WTC11 (cell line): ENCODE measurements at regions of chr14 and their contacts with region 1.

Region 1: DNA sequence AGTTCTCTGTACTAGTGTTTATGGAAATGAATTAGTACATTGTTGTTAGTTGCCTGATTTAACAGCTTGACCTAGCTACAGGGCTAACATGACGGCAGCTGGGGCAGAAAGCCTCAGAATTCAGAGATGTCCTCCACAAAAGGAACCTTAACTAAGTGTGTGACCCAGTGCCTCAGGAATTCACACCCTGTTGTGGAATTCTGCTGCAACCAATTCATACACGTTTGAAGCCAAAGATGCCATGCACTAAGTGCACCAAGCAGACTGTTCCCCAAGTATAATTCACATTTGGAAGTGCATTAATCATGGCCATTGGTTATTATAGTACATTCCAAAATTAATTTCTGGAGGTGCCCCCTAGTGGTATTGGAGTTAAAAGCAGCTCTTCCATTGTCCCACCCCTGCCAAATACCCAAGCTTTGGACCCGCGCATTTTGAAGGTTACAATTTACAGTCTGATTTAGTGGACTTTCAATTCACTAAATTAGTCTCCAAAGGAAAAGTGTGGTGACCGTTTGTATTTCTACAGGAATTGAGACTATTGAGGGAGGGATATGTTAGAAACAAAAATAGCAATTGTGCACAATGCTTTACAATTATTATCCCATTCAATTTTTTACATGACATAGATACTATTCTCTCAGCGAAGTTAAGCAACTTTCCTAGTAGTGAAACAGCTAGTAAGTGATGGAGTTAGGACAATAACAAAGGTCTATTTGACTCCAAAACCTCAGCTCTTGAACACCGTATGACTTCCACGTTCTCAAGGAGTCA is 85.9 kb downstream of the PAX9 start:
- DNase-seq: no peak
- ATAC-seq: peak; percentile 77
- H3K4me3 Mint-ChIP-seq: no peak overlapping the region
- H3K27ac Mint-ChIP-seq: no peak overlapping the region
- H3K4me1 Mint-ChIP-seq: 0 out of 2 replicates have a peak, but pooled peaks cover 9% of the 10 kb centered on the region
- H3K27me3 Mint-ChIP-seq: no peaks in the 10 kb centered on the region
- CTCF ChIP-seq: peak; percentile 72

Region 2: DNA sequence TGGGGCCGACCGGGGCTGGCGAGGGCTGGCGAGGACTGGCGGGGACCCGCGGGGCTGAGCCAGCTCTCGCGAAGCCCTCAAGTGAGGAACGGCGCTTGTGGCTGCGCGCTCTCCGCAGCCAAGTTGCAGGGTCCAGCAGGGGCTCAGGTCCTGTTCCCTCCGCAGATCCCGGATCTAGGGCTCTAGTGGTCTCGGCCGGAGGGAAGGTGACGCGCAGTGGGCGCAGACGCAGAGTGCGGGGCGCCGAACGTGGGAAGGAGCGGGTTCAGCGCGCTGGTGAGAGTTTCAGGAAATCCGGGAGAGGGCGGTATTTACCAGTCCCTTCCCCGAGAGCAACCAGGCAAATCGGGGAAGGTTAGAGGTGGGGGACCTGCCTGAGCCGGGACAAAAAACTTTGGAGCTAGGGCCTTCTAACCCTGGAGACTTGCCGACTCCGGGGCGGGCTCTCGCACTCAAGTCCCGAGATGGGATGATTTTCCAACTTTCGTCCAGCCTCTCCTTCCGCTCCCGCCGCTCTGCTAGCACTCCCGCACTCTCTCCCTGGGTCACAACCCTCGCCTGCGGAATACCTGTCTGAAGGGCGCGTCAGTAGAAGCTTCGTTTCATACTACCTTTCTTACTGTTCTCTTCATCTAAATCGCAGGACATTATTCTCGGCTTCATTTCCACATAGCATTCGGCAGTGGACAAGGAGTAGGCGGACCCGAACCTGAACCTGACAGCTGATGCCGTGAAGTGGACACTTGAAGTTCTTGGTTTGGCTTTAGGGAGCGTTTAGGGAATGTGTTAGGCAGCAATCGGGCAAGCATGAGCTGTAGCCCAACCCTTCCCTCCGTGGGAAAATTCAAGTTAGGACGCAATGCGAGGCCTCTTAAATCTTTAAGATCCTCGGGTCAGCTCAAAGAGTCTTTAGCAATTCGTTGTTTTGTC is 99.5 kb before region 1 on chr14:
- CTCF ChIA-PET with region 1: interaction called, 22 read pairs
- POLR2A ChIA-PET with region 1: no interaction called
- DNase-seq: peak; percentile 70
- ATAC-seq: peak; percentile 83
- H3K4me3 Mint-ChIP-seq: peak overlapping the region; percentile 69
- H3K27ac Mint-ChIP-seq: no peak overlapping the region
- H3K4me1 Mint-ChIP-seq: peaks cover 8% of the 10 kb centered on the region
- H3K27me3 Mint-ChIP-seq: peaks cover 100% of the 10 kb centered on the region
- CTCF ChIP-seq: no peak; the same call in 1 of the 2 replicates

Region 3: GRCh38 chr14:36655963-36656686 is 91.5 kb before region 1 on chr14:
- CTCF ChIA-PET with region 1: interaction called, 10 read pairs
- POLR2A ChIA-PET with region 1: no interaction called
- DNase-seq: peak; percentile 84
- ATAC-seq: peak; percentile 43
- H3K4me3 Mint-ChIP-seq: peak overlapping the region; percentile 55
- H3K27ac Mint-ChIP-seq: no peak overlapping the region
- H3K4me1 Mint-ChIP-seq: peaks cover 48% of the 10 kb centered on the region
- H3K27me3 Mint-ChIP-seq: peaks cover 100% of the 10 kb centered on the region
- CTCF ChIP-seq: peak; percentile 88

Region 4: DNA sequence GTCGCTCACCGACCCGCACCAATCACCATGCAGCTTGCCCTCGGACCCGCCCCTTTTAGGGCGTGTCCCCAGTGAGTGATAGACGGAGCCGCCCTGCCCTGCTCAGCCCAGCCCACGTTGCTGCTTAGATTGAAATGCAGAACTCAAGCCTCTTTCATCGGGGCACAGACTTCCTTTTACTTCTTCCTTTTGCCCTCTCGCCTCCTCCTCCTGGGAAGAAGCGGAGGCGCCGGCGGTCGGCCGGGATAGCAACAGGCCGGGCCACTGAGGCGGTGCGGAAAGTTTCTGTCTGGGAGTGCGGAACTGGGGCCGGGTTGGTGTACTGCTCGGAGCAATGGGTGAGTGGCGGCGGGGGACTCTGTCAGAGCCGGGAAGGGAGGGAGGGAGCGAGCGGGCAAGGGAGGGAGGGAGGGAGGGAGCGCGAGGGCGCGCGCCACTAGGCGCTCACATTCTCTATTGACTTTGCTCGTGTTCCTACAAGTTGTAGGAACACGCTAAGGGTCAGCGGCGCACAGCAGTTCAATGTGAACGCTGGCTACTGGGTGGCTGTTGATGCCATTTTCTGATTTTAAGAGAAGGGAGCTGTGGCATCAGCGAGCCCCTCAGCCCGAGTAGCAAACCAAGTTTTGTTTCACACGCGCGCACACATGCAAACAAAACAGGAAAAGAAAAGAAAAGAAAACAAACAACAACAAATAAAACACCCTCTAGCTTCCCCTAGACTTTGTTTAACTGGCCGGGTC is 85.7 kb before region 1 on chr14 and contains the start of gene PAX9:
- CTCF ChIA-PET with region 1: interaction called, 14 read pairs
- POLR2A ChIA-PET with region 1: no interaction called
- DNase-seq: peak; percentile 96
- ATAC-seq: peak; percentile 81
- H3K4me3 Mint-ChIP-seq: peak within 1 kb of the TSS; percentile 76
- H3K27ac Mint-ChIP-seq: no peak within 1 kb of the TSS
- H3K4me1 Mint-ChIP-seq: peaks cover 51% of the 10 kb centered on the region
- H3K27me3 Mint-ChIP-seq: peaks cover 100% of the 10 kb centered on the region
- CTCF ChIP-seq: no peak
- total RNA-seq, gene PAX9: not detected in 3 replicates

Region 5: DNA sequence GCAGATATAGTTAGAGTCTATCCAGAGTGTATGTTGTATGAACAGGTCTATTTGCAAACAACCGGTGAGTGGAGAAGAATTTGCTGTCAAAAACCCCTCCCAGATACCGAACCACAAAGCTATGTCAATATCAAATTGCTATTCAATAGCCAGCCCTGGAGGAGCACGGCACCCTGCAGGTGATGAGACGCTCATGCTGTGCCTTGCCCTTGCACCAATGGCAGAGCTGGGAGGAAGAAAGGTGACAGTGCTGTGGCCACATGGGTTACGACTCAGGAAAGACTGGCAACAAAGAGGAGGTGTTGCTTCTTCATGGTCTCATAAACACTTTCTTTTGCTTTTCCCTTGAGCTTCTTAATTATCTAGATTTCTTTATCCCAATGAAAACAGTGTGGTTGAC is 30.2 kb before region 1 on chr14:
- CTCF ChIA-PET with region 1: interaction called, 11 read pairs
- POLR2A ChIA-PET with region 1: no interaction called
- DNase-seq: peak; percentile 24
- ATAC-seq: peak; percentile 87
- H3K4me3 Mint-ChIP-seq: no peak overlapping the region
- H3K27ac Mint-ChIP-seq: no peak overlapping the region
- H3K4me1 Mint-ChIP-seq: peaks cover 12% of the 10 kb centered on the region
- H3K27me3 Mint-ChIP-seq: no peaks in the 10 kb centered on the region
- CTCF ChIP-seq: no peak

Region 6: DNA sequence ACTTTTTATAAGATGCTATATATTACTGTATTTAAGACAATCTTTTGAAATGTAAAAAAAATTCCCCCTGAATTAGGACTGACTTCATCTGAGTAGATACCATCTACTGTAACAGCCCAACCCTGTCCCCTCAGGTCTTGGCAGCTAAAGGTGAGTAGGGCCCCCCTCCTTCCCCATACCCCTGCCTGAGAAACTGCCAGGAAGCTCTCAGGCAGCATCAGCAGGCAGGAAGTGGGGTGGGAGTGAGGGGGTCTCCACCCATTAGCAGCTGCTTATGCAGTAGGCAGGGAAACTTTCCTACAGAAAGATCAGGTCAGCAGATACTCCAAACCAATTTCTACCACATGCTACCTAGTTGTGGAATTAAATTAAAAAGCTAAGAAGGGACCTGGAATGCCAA is 23.4 kb before region 1 on chr14:
- CTCF ChIA-PET with region 1: interaction called, 14 read pairs
- POLR2A ChIA-PET with region 1: no interaction called
- DNase-seq: peak; percentile 23
- ATAC-seq: peak; percentile 92
- H3K4me3 Mint-ChIP-seq: no peak overlapping the region
- H3K27ac Mint-ChIP-seq: no peak overlapping the region
- H3K4me1 Mint-ChIP-seq: peaks cover 14% of the 10 kb centered on the region
- H3K27me3 Mint-ChIP-seq: no peaks in the 10 kb centered on the region
- CTCF ChIP-seq: no peak

Region 7: GRCh38 chr14:36767603-36768281 is 20.1 kb after region 1 on chr14:
- CTCF ChIA-PET with region 1: interaction called, 12 read pairs
- POLR2A ChIA-PET with region 1: no interaction called
- DNase-seq: no peak
- ATAC-seq: peak; percentile 73
- H3K4me3 Mint-ChIP-seq: peak overlapping the region; percentile 11; the same call in 1 of the 2 replicates
- H3K27ac Mint-ChIP-seq: peak overlapping the region; percentile 93
- H3K4me1 Mint-ChIP-seq: peaks cover 30% of the 10 kb centered on the region
- H3K27me3 Mint-ChIP-seq: no peaks in the 10 kb centered on the region
- CTCF ChIP-seq: no peak